ENCODE measurements at regions of chr15 and their contacts with region 1.

Region 1: GRCh38 chr15:62847900-62848489 is 194.6 kb upstream of the TPM1 start:
- DNase-seq: peak; percentile 85
- ATAC-seq: peak; percentile 76

Region 2: GRCh38 chr15:62782039-62782791 is 65.8 kb before region 1 on chr15:
- intact Hi-C with region 1: loop called (anchors 5 kb)
- DNase-seq: peak; percentile 78
- ATAC-seq: peak; percentile 88

Region 3: GRCh38 chr15:62899090-62899493 is 51.1 kb after region 1 on chr15:
- intact Hi-C with region 1: no loop called
- DNase-seq: peak; percentile 63
- ATAC-seq: peak; percentile 73

Region 4: GRCh38 chr15:62958528-62959363 is 110.8 kb after region 1 on chr15:
- intact Hi-C with region 1: loop called (anchors 10 kb)
- DNase-seq: peak; percentile 55
- ATAC-seq: peak; percentile 88

Region 5: GRCh38 chr15:63041974-63042819 is 194.2 kb after region 1 on chr15 and contains the start of gene TPM1:
- intact Hi-C with region 1: loop called (anchors 2 kb)
- DNase-seq: peak; percentile 92
- ATAC-seq: peak; percentile 78
- total RNA-seq, gene TPM1: 12,703 TPM

Region 6: DNA sequence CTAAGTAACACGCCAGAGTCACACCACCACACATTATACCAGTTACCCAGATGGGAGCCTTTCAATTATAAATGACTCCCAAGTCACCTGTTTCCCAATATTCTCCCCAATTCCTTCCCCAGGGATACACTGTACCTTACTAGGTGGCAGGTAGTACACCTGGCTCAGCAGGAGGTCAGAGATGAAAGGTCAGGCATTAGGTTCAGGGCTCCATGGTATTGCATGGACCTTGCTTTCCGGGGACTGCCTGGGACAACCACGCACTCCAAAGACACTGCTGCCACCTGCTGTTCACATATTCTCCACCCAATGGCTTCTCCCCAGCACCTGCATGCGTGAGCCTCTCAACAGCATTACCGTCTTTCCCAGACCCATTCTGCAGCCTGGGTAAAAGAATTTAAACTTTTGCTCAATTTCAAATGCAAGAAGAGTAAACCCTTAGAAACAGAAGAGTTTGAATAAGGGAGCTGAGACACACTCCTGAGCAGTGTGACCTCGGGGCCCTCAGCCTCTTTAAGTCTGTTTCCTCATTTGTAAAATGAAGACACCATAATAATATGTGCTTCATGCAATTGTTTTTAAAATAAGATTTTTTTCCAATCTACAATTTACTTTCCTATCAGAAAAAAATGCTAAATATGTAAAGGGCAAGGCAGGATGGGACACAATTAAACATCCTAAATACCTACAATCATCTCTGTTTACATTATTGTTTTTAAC is 245.7 kb after region 1 on chr15:
- intact Hi-C with region 1: loop called (anchors 5 kb)
- DNase-seq: peak; percentile 81
- ATAC-seq: peak; percentile 94

Region 7: GRCh38 chr15:63104727-63105126 is 256.7 kb after region 1 on chr15:
- intact Hi-C with region 1: loop called (anchors 5 kb)
- DNase-seq: no peak
- ATAC-seq: no peak

Measured in Right ventricle myocardium superior (tissue), 1 donor.